ENCODE measurements at regions of chr1 and their contacts with region 1.

Region 1: DNA sequence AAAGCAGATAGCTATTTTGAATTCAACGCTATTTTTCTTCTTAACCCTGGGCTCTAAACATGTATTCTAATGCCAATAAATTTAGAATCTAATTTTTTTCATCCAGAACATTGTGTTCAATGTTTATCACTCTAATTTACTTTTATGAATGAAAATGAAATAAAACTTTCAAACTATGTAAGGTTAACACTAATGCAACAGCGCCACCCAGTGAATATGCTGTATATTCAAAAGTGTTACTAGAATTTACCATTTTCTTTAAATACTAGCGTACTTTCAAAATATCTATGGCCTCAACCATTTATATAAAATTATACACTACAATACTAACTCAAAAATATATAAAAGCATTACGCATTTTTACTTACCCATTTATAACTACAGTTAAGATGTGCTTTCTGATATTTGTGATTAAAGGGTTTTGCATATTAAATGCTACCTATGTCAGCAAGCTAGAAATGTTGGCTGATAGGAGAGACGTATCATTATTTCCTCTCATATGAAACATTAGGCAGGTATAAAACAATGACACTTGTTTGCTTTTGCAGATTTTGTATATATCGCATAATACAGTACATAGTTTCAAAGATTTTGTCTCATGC is 5.9 kb upstream of the NUF2 start:
- DNase-seq: peak in 7 of 9 donors; percentile 18 to 52 (median 35)
- ATAC-seq: peak; percentile 45
- H3K4me3 ChIP-seq: no peak overlapping the region
- H3K4me3 Mint-ChIP-seq: no peak overlapping the region
- H3K27ac ChIP-seq: no peak overlapping the region
- H3K27ac Mint-ChIP-seq: no peak overlapping the region
- H3K4me1 ChIP-seq: peaks cover 1 to 4% of the 10 kb centered on the region in 2 donors
- H3K4me1 Mint-ChIP-seq: peaks cover 2 to 6% (median 3%) of the 10 kb centered on the region in 7 donors
- H3K27me3 ChIP-seq: no peaks in the 10 kb centered on the region
- H3K27me3 Mint-ChIP-seq: no peaks in the 10 kb centered on the region

Region 2: GRCh38 chr1:162627662-162628296 is 688.1 kb before region 1 on chr1:
- CTCF ChIA-PET with region 1: no interaction called
- POLR2A ChIA-PET with region 1: no interaction called
- intact Hi-C with region 1: loop called in 1 of 2 experiments (anchors 10 kb)
- DNase-seq: peak in 3 of 9 donors; percentile 1 to 8 (median 3)
- ATAC-seq: no peak
- H3K4me3 ChIP-seq: no peak overlapping the region
- H3K4me3 Mint-ChIP-seq: no peak overlapping the region
- H3K27ac ChIP-seq: no peak overlapping the region
- H3K27ac Mint-ChIP-seq: no peak overlapping the region
- H3K4me1 ChIP-seq: no peaks in the 10 kb centered on the region
- H3K4me1 Mint-ChIP-seq: peaks cover 0 to 2% (median 0%) of the 10 kb centered on the region in 7 donors
- H3K27me3 ChIP-seq: no peaks in the 10 kb centered on the region
- H3K27me3 Mint-ChIP-seq: peaks cover 7 to 29% (median 24%) of the 10 kb centered on the region in 5 donors

Region 3: GRCh38 chr1:162847839-162848453 is 467.9 kb before region 1 on chr1:
- CTCF ChIA-PET with region 1: interaction called, 34 read pairs
- POLR2A ChIA-PET with region 1: no interaction called
- intact Hi-C with region 1: no loop called
- DNase-seq: peak; percentile 27 to 77 (median 65)
- ATAC-seq: peak; percentile 58
- H3K4me3 ChIP-seq: no peak overlapping the region
- H3K4me3 Mint-ChIP-seq: no peak overlapping the region
- H3K27ac ChIP-seq: no peak overlapping the region
- H3K27ac Mint-ChIP-seq: no peak overlapping the region
- H3K4me1 ChIP-seq: no peaks in the 10 kb centered on the region
- H3K4me1 Mint-ChIP-seq: no peaks in the 10 kb centered on the region
- H3K27me3 ChIP-seq: no peaks in the 10 kb centered on the region
- H3K27me3 Mint-ChIP-seq: peaks cover 4 to 34% (median 15%) of the 10 kb centered on the region in 5 donors

Region 4: DNA sequence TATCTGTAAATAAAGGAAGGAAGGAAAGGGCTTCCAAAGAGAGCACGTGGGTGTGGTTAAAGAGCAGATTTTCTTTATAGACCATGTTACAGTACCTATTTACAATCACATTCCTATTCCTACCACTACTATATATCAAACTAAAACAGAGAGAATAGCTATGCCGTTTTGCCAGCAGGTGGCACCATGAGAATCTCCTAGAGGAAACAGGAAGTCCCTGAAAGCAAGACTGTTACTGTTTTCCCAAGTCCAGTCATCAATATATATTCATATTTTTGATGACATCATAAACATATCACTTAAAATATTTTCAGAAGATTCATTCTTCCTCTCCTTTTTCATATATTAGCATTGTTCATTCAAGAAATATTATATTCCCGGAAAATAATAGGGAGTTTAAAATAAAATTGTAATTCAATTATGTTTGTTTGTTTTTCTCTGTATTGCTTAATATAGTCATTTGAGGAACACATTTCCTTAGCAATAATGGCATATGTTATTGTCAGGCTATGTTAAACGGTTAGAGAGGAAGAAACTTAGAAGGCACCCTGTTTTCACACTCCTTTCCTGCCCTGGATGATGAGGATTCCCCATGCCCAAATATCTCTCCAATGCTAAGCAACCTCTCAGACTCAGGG is 461.5 kb before region 1 on chr1:
- CTCF ChIA-PET with region 1: interaction called, 34 read pairs
- POLR2A ChIA-PET with region 1: no interaction called
- intact Hi-C with region 1: loop called in 1 of 2 experiments (anchors 1 kb)
- DNase-seq: peak in 6 of 9 donors; percentile 17 to 35 (median 24)
- ATAC-seq: peak; percentile 67
- H3K4me3 ChIP-seq: no peak overlapping the region
- H3K4me3 Mint-ChIP-seq: no peak overlapping the region
- H3K27ac ChIP-seq: no peak overlapping the region
- H3K27ac Mint-ChIP-seq: no peak overlapping the region
- H3K4me1 ChIP-seq: no peaks in the 10 kb centered on the region
- H3K4me1 Mint-ChIP-seq: peaks cover 0 to 4% (median 0%) of the 10 kb centered on the region in 7 donors
- H3K27me3 ChIP-seq: no peaks in the 10 kb centered on the region
- H3K27me3 Mint-ChIP-seq: peaks cover 0 to 20% (median 11%) of the 10 kb centered on the region in 5 donors

Region 5: DNA sequence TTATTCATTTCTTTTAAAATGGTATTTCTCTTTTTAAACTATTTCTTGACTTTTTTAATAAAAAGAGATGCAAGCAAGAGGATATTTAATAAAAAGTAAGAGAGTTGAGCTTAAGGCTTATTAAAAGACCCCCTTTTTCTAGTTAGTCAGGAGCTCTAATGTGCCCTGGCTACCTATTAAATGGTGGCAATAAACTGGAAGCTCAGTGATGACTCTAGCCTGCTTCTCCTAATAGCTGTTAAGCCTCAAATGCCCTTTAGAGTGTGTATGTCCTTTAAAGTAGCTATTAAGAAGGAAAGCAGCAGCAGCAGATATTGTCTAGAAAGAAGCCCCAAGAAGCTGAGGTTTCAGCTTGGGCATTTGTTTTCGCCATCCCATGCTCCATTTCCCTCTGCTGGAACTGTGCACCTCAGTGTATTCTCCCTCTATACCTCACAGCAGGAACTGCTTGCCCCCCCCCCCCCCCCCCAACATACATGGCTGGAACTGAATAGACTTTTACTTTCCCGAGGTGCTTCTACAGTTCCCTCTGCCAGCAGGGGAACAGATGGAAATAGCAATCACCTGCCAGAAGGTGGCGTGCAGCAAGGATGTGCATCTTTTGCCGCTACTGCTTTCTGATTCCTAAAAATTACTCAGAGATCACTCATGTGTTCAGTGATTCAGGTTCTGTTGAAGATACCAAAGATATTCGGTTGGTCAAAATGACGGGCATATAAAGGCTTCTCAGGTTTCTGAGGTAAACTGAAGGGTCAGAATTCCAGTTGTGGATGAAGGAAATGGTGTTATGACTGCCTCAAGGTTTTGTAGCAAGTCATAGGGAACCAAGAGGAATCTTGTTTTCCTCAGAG is 244.2 kb before region 1 on chr1:
- CTCF ChIA-PET with region 1: interaction called, 3 read pairs
- POLR2A ChIA-PET with region 1: no interaction called
- intact Hi-C with region 1: loop called (anchors 1 kb)
- DNase-seq: peak in 6 of 9 donors; percentile 1 to 28 (median 12)
- ATAC-seq: no peak
- H3K4me3 ChIP-seq: no peak overlapping the region
- H3K4me3 Mint-ChIP-seq: no peak overlapping the region
- H3K27ac ChIP-seq: no peak overlapping the region
- H3K27ac Mint-ChIP-seq: no peak overlapping the region
- H3K4me1 ChIP-seq: no peaks in the 10 kb centered on the region
- H3K4me1 Mint-ChIP-seq: peaks cover 0 to 3% (median 0%) of the 10 kb centered on the region in 7 donors
- H3K27me3 ChIP-seq: no peaks in the 10 kb centered on the region
- H3K27me3 Mint-ChIP-seq: peaks cover 44 to 74% (median 65%) of the 10 kb centered on the region in 5 donors

Region 6: DNA sequence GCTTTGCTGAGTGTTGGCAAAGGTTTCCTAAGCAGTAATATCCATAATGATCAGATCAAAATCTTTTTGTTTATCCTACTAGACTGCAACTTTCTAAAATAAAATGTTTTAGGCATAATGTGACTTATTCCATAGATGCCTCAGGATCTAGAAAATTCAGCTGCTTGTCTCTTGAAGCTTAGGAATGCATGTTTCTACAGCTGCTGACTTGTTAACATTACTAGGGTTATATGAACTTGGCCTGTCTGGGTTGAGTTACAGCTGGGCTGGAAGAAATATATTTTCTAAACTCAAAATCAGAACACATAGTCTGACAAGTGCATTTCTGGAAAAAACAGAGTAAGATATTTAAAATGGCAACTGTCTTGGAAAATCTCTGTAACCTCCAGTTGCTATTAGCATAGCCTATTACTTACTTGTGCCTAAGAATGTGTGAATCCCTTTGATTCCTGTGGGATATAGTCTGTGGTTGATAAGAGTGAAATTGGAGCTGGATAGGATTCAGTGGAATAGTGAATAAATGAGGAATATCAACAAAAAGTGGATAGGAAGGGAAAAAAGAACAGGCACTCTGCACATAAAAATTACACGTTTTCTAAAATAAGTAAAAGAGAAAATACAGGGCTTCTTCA is 185.5 kb before region 1 on chr1:
- CTCF ChIA-PET with region 1: no interaction called
- POLR2A ChIA-PET with region 1: no interaction called
- intact Hi-C with region 1: no loop called
- DNase-seq: no peak
- ATAC-seq: no peak
- H3K4me3 ChIP-seq: no peak overlapping the region
- H3K4me3 Mint-ChIP-seq: no peak overlapping the region
- H3K27ac ChIP-seq: no peak overlapping the region
- H3K27ac Mint-ChIP-seq: no peak overlapping the region
- H3K4me1 ChIP-seq: no peaks in the 10 kb centered on the region
- H3K4me1 Mint-ChIP-seq: no peaks in the 10 kb centered on the region
- H3K27me3 ChIP-seq: peaks cover 0 to 5% of the 10 kb centered on the region in 2 donors
- H3K27me3 Mint-ChIP-seq: peaks cover 9 to 16% (median 10%) of the 10 kb centered on the region in 5 donors

Region 7: GRCh38 chr1:163174524-163175437 is 141.1 kb before region 1 on chr1:
- CTCF ChIA-PET with region 1: no interaction called
- POLR2A ChIA-PET with region 1: no interaction called
- intact Hi-C with region 1: loop called in 1 of 2 experiments (anchors 5 kb)
- DNase-seq: peak in 6 of 9 donors; percentile 3 to 34 (median 10)
- ATAC-seq: no peak
- H3K4me3 ChIP-seq: no peak overlapping the region
- H3K4me3 Mint-ChIP-seq: no peak overlapping the region
- H3K27ac ChIP-seq: no peak overlapping the region
- H3K27ac Mint-ChIP-seq: no peak overlapping the region
- H3K4me1 ChIP-seq: no peaks in the 10 kb centered on the region
- H3K4me1 Mint-ChIP-seq: no peaks in the 10 kb centered on the region
- H3K27me3 ChIP-seq: no peaks in the 10 kb centered on the region
- H3K27me3 Mint-ChIP-seq: peaks cover 0 to 13% (median 4%) of the 10 kb centered on the region in 5 donors

Region 8: DNA sequence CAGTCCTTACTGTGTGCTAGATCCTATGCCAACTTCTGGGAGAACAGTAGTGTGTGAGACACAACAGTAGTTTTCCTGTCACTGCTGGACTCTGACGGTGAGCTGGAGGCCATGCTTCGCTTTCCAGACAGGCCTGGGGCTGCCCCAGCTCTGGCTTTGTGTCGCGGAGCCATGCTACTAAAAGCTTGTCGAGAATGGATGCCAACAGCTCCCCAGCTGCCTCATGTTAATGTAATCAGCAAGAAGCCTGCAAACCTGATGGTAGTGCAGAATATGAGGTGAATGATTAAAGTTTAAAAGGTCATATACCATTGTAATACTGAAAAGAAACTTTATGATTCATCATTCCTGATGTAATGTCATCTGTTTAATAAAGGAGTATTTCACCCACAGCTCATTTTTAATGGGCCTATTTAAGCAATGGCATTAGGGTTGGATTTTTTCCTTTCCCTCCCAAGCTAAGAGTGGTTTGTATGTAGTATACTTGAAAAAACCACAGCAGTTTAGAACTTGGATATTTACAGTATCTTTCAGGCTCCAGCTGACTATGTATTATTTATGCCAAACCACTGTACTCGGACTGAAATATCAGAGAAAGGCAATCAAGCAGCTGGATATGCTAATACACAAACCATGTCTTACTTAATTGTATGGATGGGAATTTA is 348.9 kb after region 1 on chr1:
- CTCF ChIA-PET with region 1: no interaction called
- POLR2A ChIA-PET with region 1: no interaction called
- intact Hi-C with region 1: no loop called
- DNase-seq: no peak
- ATAC-seq: no peak
- H3K4me3 ChIP-seq: no peak overlapping the region
- H3K4me3 Mint-ChIP-seq: no peak overlapping the region
- H3K27ac ChIP-seq: no peak overlapping the region
- H3K27ac Mint-ChIP-seq: no peak overlapping the region
- H3K4me1 ChIP-seq: no peaks in the 10 kb centered on the region
- H3K4me1 Mint-ChIP-seq: no peaks in the 10 kb centered on the region
- H3K27me3 ChIP-seq: no peaks in the 10 kb centered on the region
- H3K27me3 Mint-ChIP-seq: peaks cover 0 to 3% (median 0%) of the 10 kb centered on the region in 5 donors